ENCODE measurements at regions of chr9 and their contacts with region 1.

Region 1: DNA sequence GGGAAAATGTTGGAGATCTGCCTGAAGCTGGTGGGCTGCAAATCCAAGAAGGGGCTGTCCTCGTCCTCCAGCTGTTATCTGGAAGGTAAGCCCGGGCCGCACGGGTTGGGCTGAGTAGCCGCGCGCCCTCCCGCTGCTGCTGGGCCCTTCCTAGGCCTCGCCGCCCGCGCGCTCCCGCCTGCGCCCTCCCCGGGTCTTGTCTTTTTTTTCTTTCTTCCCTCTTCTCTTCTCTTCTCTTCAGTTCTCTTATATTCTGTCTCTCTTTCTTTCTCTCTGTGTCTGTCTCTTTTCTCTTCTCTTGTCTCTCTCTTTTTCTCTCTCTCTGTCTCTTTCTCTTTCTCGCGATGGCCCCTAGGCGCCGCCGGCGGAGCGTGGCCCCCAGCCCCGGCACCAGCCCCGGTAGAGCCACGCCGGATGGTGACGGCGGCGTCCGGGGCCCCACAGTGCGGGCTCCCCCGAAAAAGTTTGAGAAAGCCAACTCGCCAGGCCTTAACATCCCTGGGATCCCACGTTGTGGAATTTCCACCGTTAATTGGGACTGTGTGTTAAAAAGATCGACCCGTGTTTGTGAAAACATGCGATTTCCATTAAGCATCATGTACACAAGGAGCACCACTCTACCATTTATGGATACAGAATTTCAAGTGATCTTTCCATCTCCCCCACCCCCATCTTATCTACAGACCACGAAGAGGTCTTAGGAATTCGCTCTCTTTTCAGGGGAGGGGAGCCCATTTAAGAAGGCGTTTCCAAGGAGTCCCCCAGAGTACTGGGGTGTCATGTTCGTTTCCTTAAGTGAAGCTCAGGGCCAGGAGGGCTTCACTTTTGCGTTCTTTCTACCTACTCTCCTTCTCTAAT is 616 bp downstream of the ABL1 start:
- DNase-seq: peak in 1 of 2 experiments; percentile 27
- H3K4me3 ChIP-seq: peak overlapping the region; percentile 72
- H3K27ac ChIP-seq: no peak overlapping the region
- H3K4me1 ChIP-seq: peaks cover 30% of the 10 kb centered on the region
- H3K27me3 ChIP-seq: no peaks in the 10 kb centered on the region
- CTCF ChIP-seq: no peak

Region 2: DNA sequence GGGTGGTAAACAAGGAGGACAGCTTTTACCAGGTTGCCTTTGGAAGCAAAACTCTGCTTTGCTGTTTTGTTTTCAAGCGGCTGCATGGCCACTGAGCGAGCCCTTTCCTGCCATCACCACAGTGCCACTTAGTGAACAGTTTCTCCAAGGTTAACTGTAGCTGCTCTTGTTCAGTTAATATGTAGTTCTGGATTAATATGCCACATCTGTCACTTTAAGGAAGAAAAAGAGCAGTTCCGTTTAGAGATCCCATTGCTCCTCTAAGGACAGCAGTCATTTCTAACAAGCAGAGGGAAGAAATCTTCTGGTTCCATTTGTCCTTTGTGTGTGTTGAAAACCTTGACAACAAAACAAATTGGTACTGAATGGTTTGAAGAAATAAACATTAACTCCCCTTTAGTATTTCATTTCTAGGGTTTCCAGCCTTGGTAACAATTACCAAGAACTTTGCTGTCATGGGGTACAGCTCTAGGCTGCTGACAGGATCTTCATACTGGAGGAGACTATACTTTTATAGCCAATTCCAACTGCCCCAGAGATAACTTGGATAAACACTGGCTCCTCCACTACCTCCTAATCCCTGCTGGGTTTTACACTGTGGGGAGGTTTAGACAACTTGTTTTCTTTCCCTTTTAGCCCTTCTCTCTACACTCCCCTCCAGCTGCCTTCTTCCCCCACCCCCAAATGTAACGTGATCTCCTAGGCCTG is 10.9 kb before region 1 on chr9:
- CTCF ChIA-PET with region 1: interaction called, 7 read pairs
- POLR2A ChIA-PET with region 1: interaction called, 5 read pairs
- intact Hi-C with region 1: loop called (anchors 1 kb)
- DNase-seq: peak in 1 of 2 experiments; percentile 29
- H3K4me3 ChIP-seq: no peak overlapping the region
- H3K27ac ChIP-seq: no peak overlapping the region
- H3K4me1 ChIP-seq: peaks cover 17% of the 10 kb centered on the region
- H3K27me3 ChIP-seq: no peaks in the 10 kb centered on the region
- CTCF ChIP-seq: no peak

Region 3: GRCh38 chr9:130940693-130941576 is 105.3 kb after region 1 on chr9:
- CTCF ChIA-PET with region 1: no interaction called
- POLR2A ChIA-PET with region 1: no interaction called
- intact Hi-C with region 1: no loop called
- DNase-seq: peak; percentile 85 to 96
- H3K4me3 ChIP-seq: no peak overlapping the region; the same call in 1 of the 2 replicates
- H3K27ac ChIP-seq: no peak overlapping the region
- H3K4me1 ChIP-seq: peaks cover 14% of the 10 kb centered on the region
- H3K27me3 ChIP-seq: peaks cover 17% of the 10 kb centered on the region; the same call in 1 of the 2 replicates
- CTCF ChIP-seq: peak; percentile 91

Region 4: GRCh38 chr9:131019388-131020239 is 183.9 kb after region 1 on chr9:
- CTCF ChIA-PET with region 1: no interaction called
- POLR2A ChIA-PET with region 1: interaction called, 13 read pairs
- intact Hi-C with region 1: no loop called
- DNase-seq: no peak
- H3K4me3 ChIP-seq: no peak overlapping the region
- H3K27ac ChIP-seq: no peak overlapping the region
- H3K4me1 ChIP-seq: no peaks in the 10 kb centered on the region
- H3K27me3 ChIP-seq: peaks cover 27% of the 10 kb centered on the region
- CTCF ChIP-seq: no peak

Measured in PC-9 (cell line).